Activated T-helper 1 cell treated with anti-CD3 and anti-CD28 coated beads, Interleukin-12 subunit alpha, Interleukin-12 subunit beta, Interleukin-2, Interleukin-4 antibody, amounts not matched to agents 30 ng/mL and 10 ng/mL and 1 ng/mL, durations not matched to agents 14 hours and 24 hours and 36 hours (primary cell): ENCODE measurements at regions of chr20 and their contacts with region 1.

Region 1: DNA sequence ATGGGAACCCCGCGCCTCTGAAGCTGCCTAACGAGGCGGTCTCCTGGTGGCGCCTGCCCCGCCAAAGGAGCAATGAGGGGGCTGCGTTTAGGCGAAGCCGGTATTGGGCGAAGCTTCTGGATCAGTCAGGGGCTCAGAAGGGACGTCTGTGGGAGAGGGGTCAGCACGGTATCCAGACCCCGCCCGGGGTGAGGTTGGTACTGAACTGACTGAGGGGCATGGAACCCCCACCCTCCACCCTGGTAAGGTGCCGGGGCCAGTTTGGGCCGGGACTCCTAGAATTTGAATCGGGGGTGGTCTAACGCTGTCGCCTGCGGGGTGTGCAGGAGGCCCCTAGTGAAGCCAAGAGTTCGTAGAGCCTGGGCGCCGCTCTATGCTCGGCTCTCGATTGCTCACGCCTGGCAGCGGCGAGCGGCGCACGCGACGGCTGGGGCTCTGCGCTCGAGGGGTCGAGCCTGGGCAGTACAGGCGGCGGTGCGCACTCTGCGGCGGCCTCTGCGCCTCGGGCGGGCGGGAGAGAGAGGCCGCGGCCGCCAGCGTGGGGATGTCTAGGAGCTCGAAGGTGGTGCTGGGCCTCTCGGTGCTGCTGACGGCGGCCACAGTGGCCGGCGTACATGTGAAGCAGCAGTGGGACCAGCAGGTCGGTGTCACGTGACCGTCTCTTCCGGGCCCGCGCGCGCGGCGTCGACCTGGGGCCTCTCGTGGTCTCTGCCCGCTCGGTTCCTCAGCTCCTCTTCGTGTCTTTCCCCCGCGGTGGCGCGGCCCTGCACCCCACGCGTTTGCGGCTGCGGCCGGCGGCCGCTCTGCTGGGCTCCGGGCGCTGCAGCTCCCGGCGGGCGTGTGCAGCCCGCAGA is at the starts of genes KAT14 and PET117:
- DNase-seq: peak; percentile 90
- H3K4me3 Mint-ChIP-seq: peak within 1 kb of the TSS; percentile 90
- H3K27ac Mint-ChIP-seq: peak within 1 kb of the TSS; percentile 82
- H3K4me1 Mint-ChIP-seq: peaks cover 29% of the 10 kb centered on the region
- H3K27me3 Mint-ChIP-seq: no peaks in the 10 kb centered on the region
- total RNA-seq, gene KAT14: 17.1 and 17.9 TPM in 2 replicates
- total RNA-seq, gene PET117: 16.3 and 16.7 TPM in 2 replicates

Region 2: DNA sequence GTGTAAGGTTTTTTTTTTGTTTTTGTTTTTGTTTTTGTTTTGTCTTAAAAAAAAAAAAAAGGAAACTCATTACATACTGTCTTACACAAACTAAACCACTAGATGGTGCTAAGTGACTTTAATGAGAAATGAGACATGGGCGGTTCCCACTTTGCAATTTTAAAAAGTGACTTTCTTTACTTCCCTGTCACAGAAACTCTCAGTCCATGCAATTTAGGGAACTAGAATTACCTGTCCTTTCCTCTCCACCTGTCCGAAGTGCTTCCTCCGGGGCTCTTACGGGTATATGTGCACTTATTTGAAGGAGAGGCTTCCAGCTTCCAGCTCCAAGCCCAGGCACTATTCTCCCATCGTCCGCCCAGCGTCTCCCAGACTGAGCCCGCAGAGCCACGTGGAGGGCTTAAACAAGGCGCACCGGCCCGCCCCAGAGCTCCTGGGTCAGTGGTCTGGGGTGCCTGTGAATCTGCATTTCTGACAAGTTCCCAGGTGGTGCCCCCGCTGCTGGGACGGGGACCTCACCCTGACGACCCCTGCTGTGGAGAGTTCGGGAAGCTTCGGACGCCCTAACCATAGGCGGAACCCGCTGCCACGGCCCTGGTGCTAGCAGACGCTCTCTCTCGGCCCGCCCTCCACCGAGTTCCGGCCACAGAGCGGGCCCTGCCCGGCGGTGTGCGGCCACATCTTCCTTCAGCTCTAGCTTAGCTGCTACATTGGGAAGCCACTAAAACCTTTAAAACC is 632.6 kb before region 1 on chr20:
- intact Hi-C with region 1: loop called (anchors 10 kb)
- DNase-seq: peak; percentile 71
- H3K4me3 Mint-ChIP-seq: peak overlapping the region; percentile 81
- H3K27ac Mint-ChIP-seq: peak overlapping the region; percentile 86
- H3K4me1 Mint-ChIP-seq: peaks cover 71% of the 10 kb centered on the region
- H3K27me3 Mint-ChIP-seq: peaks cover 4% of the 10 kb centered on the region

Region 3: DNA sequence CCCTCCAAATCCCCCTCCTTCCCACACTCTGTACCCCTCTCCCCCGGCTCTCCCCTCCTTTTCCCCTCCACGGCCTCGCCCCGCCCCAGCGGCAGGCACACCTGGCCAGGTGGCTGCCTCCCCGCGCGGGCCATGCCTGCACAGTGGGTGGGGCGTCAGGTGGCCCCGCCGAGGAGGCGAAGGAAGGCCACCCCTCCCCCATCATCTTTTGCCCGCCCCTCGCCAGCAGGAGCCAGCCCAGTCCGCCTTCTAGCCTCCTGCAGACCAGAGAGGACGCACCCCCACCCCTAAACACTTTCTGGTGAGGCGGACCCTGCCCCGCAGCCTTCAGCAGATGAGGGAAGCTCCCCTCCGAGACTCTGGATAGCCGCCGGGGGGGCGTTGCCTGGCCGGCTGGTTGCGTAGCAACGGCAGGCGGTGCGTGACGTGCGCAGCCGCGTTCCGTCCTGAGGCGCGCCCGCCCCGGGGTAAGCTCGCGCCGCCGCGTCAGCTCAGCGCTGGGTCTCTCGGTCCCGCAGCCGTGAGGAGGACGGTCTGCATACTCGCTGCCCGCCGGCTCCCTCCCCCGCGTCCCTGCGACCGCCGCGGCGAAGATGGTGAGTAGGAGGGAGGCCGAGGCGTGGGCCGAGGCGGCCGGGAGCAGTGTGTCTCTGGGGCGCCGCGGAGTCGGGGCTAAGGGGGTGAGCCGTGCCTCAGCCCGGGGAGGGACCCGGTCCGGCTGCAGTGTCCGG is 567.9 kb before region 1 on chr20 and contains the start of gene DSTN:
- intact Hi-C with region 1: loop called (anchors 5 kb)
- DNase-seq: peak; percentile 86
- H3K4me3 Mint-ChIP-seq: peak within 1 kb of the TSS; percentile 94
- H3K27ac Mint-ChIP-seq: peak within 1 kb of the TSS; percentile 93
- H3K4me1 Mint-ChIP-seq: peaks cover 19% of the 10 kb centered on the region
- H3K27me3 Mint-ChIP-seq: peaks cover 6% of the 10 kb centered on the region
- total RNA-seq, gene DSTN: 58.2 and 58.8 TPM in 2 replicates

Region 4: DNA sequence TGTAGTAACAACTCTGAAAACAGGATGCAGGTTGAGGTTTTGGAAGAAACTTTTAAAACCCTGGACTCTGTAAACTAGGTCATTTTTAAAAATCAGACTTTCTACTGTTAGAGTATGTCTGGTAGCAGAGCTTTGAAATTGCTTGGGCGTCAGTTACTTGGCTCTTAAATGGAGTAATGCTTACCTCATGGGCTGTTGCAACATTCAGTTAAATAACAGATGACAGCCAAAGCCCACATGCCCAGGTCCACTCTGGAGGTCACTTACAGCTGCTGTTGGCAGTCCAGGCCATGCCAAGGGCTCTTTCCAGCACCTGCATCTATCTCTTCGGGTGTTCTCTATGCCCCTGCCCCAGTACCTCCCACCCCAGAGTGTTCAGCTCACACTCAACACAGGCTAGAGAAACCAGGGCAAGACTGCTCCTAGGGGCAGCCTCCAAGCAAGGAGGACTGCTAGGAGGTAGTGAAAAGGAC is 341.5 kb before region 1 on chr20:
- intact Hi-C with region 1: no loop called
- DNase-seq: no peak
- H3K4me3 Mint-ChIP-seq: no peak overlapping the region
- H3K27ac Mint-ChIP-seq: no peak overlapping the region
- H3K4me1 Mint-ChIP-seq: no peaks in the 10 kb centered on the region
- H3K27me3 Mint-ChIP-seq: peaks cover 9% of the 10 kb centered on the region

Region 5: GRCh38 chr20:17968366-17969279 is 169.0 kb before region 1 on chr20 and contains the starts of genes MGME1 and SNX5:
- intact Hi-C with region 1: loop called (anchors 1 kb)
- DNase-seq: peak; percentile 100
- H3K4me3 Mint-ChIP-seq: peak within 1 kb of the TSS; percentile 99
- H3K27ac Mint-ChIP-seq: peak within 1 kb of the TSS; percentile 98
- H3K4me1 Mint-ChIP-seq: peaks cover 62% of the 10 kb centered on the region
- H3K27me3 Mint-ChIP-seq: no peaks in the 10 kb centered on the region
- total RNA-seq, gene MGME1: 32.1 and 33.6 TPM in 2 replicates
- total RNA-seq, gene SNX5: 238 and 248 TPM in 2 replicates

Region 6: DNA sequence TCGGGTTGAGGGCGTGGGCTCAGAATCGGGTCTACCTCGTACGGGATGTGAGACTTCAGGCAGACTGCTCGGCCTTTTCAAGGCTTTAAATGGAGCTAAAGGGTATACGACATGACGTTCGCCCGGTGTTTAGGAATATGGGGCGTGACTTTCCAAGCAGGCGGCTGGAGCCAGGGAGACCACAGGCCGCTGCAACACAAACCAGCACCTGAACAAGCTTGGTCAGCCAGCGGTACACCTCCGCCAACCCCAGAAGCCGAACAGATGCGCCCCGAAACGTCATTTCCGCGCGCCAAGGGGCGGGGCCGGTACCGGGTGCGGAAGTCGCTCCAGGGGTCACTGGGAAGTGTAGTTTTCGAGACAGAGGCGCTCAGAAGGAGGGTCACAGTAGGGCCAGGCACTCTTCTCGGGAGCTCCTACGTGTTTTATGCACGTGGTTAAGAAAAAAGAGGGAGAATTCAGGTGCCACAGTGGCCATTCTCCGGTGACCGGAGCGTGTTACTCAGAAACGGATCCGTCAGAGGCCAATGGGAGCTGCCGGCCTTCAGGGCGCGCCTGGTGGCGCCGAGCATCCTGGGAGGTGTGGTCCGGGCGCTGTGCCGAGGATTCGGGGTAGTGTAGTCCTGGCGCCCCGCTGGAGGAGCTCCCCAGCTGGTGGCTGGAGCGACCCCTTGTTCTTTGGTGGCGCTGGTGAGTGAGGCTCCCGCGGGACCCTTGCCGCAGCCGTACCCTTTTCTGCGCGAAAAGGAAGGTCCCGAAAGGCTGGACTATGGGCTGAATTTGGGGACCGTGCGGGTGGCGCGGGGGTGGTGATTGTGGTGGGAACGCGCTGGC is 150.5 kb after region 1 on chr20 and contains the start of gene ZNF133:
- intact Hi-C with region 1: loop called (anchors 1 kb)
- DNase-seq: peak; percentile 96
- H3K4me3 Mint-ChIP-seq: peak within 1 kb of the TSS; percentile 94
- H3K27ac Mint-ChIP-seq: peak within 1 kb of the TSS; percentile 97
- H3K4me1 Mint-ChIP-seq: peaks cover 23% of the 10 kb centered on the region
- H3K27me3 Mint-ChIP-seq: peaks cover 16% of the 10 kb centered on the region
- total RNA-seq, gene ZNF133: 7.6 and 7.8 TPM in 2 replicates

Region 7: GRCh38 chr20:18507218-18508021 is 369.8 kb after region 1 on chr20 and contains the start of gene SEC23B:
- intact Hi-C with region 1: loop called (anchors 1 kb)
- DNase-seq: peak; percentile 97
- H3K4me3 Mint-ChIP-seq: peak within 1 kb of the TSS; percentile 99
- H3K27ac Mint-ChIP-seq: peak within 1 kb of the TSS; percentile 100
- H3K4me1 Mint-ChIP-seq: peaks cover 44% of the 10 kb centered on the region
- H3K27me3 Mint-ChIP-seq: peaks cover 2% of the 10 kb centered on the region
- total RNA-seq, gene SEC23B: 110 and 113 TPM in 2 replicates

Region 8: DNA sequence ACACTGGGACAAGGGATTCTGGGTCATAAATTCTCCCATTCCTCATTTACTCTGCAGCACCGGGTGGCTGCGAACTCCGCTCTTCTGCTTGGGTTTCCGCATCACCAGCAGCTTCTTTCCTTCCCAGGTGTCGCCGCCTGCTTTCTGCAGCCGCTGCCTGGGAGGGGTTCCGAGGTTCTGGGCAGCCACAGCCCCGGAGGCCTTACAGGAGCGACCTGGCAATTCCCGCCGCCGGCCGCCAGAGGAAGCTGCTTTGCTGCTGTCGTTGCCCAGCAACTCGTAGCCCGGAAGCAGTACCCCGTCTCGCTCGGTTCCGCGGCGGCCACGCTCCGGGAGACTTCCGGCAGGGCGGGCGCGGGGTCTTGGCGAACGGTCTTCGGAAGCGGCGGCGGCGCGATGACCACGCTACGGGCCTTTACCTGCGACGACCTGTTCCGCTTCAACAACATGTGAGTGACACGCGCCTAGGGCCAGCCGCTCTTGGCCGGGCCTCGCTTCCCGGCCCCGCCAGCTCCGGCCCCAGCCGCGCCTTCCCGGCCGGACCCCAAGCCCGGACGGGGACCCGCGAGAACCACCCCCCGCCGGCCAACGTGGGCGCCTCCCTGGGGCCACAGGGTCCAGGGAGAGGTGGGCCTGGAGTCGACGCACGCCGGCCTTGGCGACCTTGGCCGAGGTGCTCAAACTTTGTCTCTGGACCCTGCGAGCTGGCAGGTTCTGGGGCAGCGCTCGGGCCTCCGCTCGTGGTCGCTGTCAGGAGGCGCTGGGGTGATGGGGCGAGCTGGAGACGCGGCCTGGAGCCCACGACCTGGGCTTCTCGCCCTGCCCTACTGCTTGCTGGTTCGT is 1879.6 kb after region 1 on chr20 and contains the start of gene NAA20:
- intact Hi-C with region 1: loop called (anchors 10 kb)
- DNase-seq: peak; percentile 88
- H3K4me3 Mint-ChIP-seq: peak within 1 kb of the TSS; percentile 90
- H3K27ac Mint-ChIP-seq: peak within 1 kb of the TSS; percentile 86
- H3K4me1 Mint-ChIP-seq: peaks cover 44% of the 10 kb centered on the region
- H3K27me3 Mint-ChIP-seq: no peaks in the 10 kb centered on the region
- total RNA-seq, gene NAA20: 86.3 and 89.9 TPM in 2 replicates